ENCODE measurements at regions of chr5 and their contacts with region 1.

Region 1: GRCh38 chr5:172984243-172984953 is 827 bp downstream of the ATP6V0E1 start:
- DNase-seq: peak; percentile 96
- H3K4me3 ChIP-seq: peak overlapping the region; percentile 81 to 95 (median 90)
- H3K27ac ChIP-seq: peak overlapping the region; percentile 94 to 98 (median 96)
- H3K4me1 ChIP-seq: peaks cover 17 to 53% (median 42%) of the 10 kb centered on the region in 4 donors
- H3K27me3 ChIP-seq: no peaks in the 10 kb centered on the region
- CTCF ChIP-seq: peak; percentile 38 to 52 (median 48)
- EP300 ChIP-seq: no peak
- POLR2A ChIP-seq: no peak

Region 2: DNA sequence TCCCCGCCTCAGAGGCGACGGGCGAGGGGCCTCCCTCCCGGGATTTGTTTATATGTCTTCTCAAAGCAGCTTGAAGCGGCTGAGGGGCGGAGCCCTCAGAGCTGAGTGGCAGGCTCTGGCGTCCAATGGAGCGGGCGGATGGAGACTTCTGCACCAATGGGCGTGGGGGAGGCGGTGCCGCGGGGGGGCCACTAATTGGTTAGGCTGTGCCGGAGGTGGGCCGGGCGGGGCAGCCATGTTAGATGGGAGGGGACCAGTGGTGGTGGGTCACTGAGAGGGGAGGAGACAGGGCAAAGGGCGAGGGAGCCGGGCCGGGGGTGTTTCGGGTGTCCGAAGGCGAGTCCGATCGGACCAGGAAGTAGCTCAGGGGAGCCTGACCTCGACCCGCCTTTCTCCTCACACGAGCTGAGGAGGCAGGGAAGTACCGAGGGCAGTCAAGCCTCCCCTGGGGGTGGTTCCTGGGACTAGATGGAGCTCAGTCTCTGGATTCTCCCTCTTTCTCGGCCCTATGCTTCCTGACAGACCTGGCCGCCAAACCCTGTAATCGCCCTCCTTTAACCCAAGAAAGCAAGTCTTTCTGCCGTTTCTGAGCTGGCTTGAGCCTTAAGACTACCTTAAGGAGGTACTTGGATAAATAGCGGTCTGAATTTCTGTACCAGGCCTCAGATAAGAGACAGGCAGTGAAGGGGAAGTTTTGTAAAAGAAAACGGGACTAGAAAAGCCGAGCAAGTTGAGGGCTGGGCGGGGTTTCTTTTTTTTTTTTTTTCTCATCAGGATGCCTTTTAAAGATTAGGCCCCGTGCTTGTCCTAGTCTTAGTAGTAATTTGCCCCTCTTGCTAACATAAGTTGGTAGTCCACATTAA is 72.9 kb after region 1 on chr5:
- intact Hi-C with region 1: loop called (anchors 2 kb)
- DNase-seq: peak; percentile 100
- H3K4me3 ChIP-seq: peak overlapping the region; percentile 88 to 100 (median 96)
- H3K27ac ChIP-seq: peak overlapping the region; percentile 96 to 100 (median 98)
- H3K4me1 ChIP-seq: peaks cover 26 to 56% (median 50%) of the 10 kb centered on the region in 4 donors
- H3K27me3 ChIP-seq: peaks cover 0 to 4% (median 0%) of the 10 kb centered on the region in 4 donors
- CTCF ChIP-seq: peak; percentile 12 to 33 (median 25)
- EP300 ChIP-seq: no peak
- POLR2A ChIP-seq: peak; percentile 51

Region 3: DNA sequence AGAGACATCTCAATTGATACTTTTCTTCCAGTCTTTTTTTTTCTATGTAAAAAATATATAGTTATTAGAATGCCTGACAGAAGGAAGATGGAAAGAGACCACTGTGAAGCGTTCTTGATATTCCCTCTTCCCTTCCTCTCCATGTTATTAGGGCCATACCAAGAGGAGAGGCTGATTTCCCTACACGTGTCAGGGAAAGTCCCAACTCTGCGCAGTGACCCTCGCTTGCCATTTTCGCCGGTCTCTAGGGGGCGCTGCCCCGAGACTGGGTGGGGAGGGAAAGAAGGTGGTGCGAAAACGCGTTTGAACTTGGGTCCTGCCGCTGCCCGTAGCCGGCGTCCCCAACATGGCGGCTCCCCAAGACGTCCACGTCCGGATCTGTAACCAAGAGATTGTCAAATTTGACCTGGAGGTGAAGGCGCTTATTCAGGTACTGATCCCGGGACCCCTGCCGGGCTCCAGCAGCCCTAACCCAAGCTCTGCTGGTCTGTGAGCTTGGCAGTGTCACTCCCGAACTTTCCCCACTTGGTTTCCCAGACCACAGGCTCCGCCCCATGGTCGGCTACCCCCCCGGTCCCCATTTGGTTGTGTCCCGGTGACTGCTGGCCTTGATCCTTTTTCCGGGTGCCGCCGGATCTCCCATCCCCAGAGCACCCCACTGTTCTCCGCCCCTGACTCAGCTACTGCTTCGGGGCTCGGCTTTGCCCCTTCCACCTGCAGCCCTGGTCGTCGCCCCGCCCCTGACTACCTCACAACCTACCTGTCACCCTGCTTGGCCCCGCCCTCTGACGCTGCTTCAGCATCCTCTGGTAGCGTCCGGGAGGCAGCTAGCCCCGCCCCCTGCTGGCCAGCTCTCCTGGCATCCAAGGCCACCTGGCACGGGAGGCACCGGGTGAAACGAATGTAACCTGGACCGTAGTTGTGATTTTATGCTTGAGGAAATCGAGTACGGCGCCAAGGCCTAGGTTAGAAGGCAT is 160.1 kb after region 1 on chr5 and contains the start of gene BNIP1:
- intact Hi-C with region 1: loop called (anchors 5 kb)
- DNase-seq: peak; percentile 98
- H3K4me3 ChIP-seq: peak within 1 kb of the TSS; percentile 74 to 85 (median 81)
- H3K27ac ChIP-seq: peak within 1 kb of the TSS; percentile 84 to 87 (median 86)
- H3K4me1 ChIP-seq: peaks cover 4 to 11% (median 10%) of the 10 kb centered on the region in 4 donors
- H3K27me3 ChIP-seq: no peaks in the 10 kb centered on the region
- CTCF ChIP-seq: peak; percentile 89 to 96 (median 95)
- EP300 ChIP-seq: no peak
- POLR2A ChIP-seq: no peak
- total RNA-seq, gene BNIP1: 5.4 to 9.4 (median 8.3) TPM